Cardiac septum (tissue), 1 donor: ENCODE measurements at regions of chr1 and their contacts with region 1.

Region 1: GRCh38 chr1:183234660-183235476 is 48.8 kb downstream of the LAMC2 start:
- DNase-seq: no peak

Region 2: GRCh38 chr1:183318433-183318832 is 83.6 kb after region 1 on chr1:
- intact Hi-C with region 1: loop called (anchors 5 kb)
- DNase-seq: peak; percentile 84